ENCODE measurements at regions of chr6 and their contacts with region 1.

Region 1: DNA sequence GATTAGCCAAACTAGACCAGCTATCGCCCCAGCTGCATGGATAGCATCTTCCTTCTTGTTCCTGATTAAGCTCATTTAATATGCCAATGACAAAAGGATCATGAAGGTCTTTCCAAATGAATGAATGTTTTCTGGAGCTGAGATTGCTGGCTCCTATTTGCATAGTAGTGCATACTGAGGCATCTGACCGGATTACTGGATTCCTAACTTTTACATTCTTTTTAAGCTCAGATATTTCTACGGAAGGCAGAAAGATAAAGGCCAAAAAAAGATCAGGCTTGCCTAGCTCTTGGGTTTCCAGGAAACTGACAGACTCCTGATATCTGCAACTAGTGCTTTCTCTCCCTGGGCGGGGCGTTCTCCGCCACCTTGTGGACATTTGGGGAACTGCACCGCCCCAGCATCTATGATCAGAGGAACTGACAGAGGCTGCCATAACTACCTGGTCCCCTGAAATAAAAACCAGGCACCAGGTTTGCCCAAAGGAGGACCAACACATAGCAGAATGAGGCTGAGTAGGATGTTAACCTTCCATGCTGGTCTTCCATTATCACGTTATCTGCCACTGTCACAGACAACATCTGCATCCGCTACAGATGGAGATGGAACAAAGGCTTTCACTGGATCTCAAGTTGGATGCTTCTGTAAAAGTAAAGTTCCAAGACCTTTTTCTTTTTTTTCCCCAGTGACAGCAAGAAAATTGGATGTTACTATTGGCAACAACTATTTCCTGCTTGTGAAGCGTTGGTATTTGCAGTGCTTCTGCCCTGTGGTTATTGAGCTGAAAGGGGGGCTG is 33.2 kb downstream of the NT5E start:
- DNase-seq: peak; percentile 83
- H3K4me3 Mint-ChIP-seq: no peak overlapping the region
- H3K27ac Mint-ChIP-seq: no peak overlapping the region
- H3K4me1 Mint-ChIP-seq: peaks cover 7% of the 10 kb centered on the region
- H3K27me3 Mint-ChIP-seq: peaks cover 14% of the 10 kb centered on the region

Region 2: DNA sequence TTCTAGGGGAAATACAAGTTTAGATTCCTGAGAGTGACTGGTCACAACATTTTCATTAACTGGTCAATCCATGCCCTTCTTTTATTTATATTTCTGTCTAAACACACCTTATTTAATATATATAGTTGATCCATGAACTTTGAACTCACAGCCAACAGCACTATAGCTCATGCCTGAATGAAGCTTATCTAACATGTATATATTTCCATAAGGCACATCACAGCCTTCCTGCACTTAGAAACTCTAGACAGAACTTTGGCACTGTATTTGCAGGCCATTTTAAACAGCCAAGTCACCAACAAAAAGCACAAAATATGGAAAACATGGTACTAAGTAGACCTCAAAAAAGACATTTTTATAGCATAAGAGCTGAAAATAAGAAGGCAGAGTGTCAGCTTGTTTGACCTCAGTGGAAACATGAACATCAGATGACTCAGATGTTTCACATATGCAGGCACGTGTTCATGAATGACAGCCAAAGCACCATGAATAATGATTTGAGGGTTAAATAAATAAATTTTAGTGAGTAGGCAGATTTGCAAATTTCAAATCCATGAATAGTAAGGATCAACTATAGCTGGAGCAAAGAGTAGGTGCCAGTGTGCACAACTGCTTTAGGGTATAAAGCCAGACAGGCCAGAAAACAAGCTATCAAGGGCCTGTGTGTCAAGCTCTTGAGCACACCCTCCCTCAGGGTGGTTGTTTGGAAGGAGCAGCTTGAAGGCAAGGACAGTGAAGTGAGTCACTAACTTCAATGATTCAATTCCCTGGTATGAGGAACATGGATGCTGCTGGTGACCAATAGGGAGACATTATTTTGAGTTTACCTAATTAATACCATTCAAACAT is 122.1 kb before region 1 on chr6:
- CTCF ChIA-PET with region 1: interaction called, 112 read pairs
- DNase-seq: no peak
- H3K4me3 Mint-ChIP-seq: no peak overlapping the region
- H3K27ac Mint-ChIP-seq: no peak overlapping the region
- H3K4me1 Mint-ChIP-seq: no peaks in the 10 kb centered on the region
- H3K27me3 Mint-ChIP-seq: peaks cover 8% of the 10 kb centered on the region

Region 3: DNA sequence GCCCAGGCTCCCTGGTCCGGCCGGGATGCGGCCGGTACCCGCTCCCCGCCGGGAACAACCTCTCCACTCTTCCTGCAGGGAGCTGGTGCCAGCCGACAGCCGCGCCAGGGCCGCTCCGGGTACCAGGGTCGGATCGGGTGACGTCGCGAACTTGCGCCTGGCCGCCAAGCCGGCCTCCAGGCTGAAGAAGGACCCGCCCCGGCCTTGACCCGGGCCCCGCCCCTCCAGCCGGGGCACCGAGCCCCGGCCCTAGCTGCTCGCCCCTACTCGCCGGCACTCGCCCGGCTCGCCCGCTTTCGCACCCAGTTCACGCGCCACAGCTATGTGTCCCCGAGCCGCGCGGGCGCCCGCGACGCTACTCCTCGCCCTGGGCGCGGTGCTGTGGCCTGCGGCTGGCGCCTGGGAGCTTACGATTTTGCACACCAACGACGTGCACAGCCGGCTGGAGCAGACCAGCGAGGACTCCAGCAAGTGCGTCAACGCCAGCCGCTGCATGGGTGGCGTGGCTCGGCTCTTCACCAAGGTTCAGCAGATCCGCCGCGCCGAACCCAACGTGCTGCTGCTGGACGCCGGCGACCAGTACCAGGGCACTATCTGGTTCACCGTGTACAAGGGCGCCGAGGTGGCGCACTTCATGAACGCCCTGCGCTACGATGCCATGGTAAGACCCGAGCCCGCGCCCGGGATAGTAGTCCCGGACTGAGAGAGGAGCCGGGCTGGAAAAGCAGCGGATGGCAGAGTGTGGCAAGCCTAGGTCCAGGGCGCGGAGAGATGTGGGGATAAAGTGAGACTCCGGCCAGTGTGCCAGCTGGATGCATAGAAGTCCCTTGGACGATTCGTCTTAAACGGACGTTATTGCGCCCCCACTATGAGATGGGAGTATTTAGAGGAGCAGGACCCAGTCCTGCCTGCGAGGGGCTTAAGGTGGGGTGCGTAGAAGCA is 33.0 kb before region 1 on chr6 and contains the start of gene NT5E:
- CTCF ChIA-PET with region 1: interaction called, 51 read pairs
- DNase-seq: peak; percentile 57
- H3K4me3 Mint-ChIP-seq: peak within 1 kb of the TSS; percentile 73
- H3K27ac Mint-ChIP-seq: peak within 1 kb of the TSS; percentile 53
- H3K4me1 Mint-ChIP-seq: peaks cover 46% of the 10 kb centered on the region
- H3K27me3 Mint-ChIP-seq: peaks cover 79% of the 10 kb centered on the region

Region 4: DNA sequence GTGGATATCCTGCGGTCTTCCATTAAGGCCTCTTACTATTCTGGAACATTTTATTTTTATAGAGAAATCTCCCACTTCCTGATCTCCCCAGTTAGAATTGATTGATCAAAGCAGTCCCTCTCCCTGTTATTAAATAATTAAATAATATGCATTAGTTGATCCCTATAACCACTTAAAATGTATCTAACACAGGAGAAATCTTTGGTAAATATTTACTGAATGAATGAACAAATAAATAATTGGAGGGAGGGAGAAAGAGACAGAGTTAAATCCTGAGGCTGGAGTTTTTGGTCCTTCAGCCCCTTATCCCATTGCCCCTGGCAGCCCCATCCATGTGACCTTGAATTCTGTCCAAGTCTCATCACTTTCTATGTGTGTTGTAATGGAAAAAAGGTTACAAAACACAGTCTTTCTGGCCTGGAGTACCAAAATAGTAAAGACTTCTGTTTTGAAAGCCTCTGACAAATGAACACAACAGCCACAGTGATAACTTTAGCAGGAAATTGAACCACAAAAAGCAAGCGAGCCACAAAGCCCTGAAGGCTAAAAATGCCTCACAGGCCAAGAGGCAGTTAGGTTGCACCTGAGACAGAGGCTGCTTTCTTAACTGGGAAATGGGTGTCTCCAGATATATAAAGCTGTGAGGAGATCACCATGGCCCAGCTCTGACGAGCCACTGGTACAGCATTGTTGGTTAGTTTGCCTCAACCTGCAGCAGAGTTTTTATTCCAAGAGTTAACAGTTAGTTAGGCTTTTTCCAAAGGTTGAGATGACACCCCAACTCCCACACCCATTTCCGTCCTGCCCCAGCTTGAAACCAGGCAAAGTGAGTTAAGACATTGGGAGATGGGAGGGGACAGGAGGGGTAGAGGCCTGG is 21.9 kb before region 1 on chr6:
- CTCF ChIA-PET with region 1: interaction called, 25 read pairs
- DNase-seq: peak; percentile 65
- H3K4me3 Mint-ChIP-seq: no peak overlapping the region
- H3K27ac Mint-ChIP-seq: peak overlapping the region; percentile 89
- H3K4me1 Mint-ChIP-seq: peaks cover 69% of the 10 kb centered on the region
- H3K27me3 Mint-ChIP-seq: peaks cover 15% of the 10 kb centered on the region

Region 5: DNA sequence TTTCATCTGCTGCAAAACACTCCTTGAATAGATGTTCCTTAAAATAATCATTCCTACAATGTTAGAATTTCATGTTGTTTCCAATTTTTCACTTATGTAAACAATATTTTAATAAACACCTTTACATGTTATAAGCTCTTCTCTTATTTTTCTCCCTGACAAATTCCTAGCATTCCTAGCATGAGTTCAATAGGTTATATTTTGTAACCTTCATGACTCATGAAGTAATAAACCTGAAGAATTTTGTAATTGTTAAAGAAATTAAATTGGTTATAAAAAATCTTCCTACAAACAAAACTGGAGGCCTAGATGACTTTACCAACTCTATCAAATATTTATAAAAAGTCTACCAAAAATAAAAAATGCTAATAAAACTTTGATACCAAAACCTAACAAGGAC is 33.1 kb after region 1 on chr6:
- CTCF ChIA-PET with region 1: no interaction called
- DNase-seq: no peak
- H3K4me3 Mint-ChIP-seq: no peak overlapping the region
- H3K27ac Mint-ChIP-seq: no peak overlapping the region
- H3K4me1 Mint-ChIP-seq: no peaks in the 10 kb centered on the region
- H3K27me3 Mint-ChIP-seq: no peaks in the 10 kb centered on the region

Region 6: DNA sequence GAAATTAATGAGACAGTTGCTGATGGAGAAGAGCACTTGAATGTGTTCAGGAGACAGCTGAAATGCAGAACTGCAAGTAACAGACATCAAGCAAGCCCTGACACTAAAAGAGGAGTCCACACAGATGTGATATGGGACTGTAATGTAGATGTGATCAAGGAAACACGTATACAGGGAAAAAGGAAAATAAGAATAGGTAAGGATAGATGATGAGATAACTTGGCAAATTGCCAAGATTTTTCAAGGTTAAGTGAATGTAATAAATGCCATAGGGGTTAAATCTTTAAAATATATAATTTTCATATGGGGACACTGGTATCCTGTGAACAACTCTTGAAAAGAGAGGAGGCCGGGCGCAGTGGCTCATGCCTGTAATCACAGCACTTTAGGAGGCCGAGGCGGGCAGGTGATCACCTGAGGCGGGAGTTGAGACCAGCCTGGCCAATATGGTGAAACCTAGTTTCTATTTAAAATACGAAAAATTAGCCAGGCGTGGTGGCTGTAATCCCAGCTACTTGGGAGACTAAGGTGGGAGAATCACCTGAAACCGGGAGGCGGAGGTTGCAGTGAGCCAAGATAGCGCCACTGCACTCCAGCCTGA is 117.7 kb after region 1 on chr6:
- CTCF ChIA-PET with region 1: no interaction called
- DNase-seq: no peak
- H3K4me3 Mint-ChIP-seq: no peak overlapping the region
- H3K27ac Mint-ChIP-seq: no peak overlapping the region
- H3K4me1 Mint-ChIP-seq: no peaks in the 10 kb centered on the region
- H3K27me3 Mint-ChIP-seq: no peaks in the 10 kb centered on the region

Measured in activated naive CD4-positive, alpha-beta T cell treated with anti-CD3 and anti-CD28 coated beads, Interleukin-2, amount 10 ng/mL, durations not matched to agents 7 days and 5 days (primary cell).